ENCODE measurements at regions of chr2 and their contacts with region 1.

Region 1: DNA sequence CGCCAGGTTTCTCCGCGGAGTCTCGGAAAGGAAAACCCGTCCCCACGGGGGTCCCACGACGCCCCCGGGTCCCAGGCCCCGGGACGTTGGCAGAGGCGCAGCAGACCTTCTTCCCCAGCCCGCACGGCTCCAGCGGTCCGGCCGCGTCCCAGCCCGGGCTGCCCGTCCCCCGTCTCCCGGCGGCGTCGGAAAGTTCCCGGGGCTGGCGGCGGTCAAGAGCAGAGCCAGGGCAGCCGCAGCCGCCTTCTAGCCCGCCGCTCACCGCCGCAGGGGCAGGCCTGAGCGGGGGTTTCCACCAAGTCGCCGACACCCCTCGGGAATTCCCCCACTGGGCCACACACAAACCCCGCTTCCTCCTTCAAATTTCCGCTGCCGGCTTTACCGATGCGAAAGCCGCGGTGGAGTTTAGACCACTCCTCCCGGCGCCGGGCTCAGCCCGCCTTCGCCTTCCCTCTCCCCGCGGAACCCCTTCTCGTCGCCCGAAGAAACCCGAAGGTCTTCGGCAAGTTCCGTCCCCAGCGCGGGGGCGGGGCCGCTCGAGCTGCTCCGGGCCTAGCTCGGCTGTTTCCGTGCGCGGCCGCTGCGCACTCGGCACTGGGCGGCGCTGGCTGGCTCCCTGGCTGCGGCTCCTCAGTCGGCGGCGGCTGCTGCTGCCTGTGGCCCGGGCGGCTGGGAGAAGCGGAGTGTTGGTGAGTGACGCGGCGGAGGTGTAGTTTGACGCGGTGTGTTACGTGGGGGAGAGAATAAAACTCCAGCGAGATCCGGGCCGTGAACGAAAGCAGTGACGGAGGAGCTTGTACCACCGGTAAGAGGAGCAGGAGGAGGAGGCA is at the start of gene CREB1:
- DNase-seq: peak; percentile 100
- H3K4me3 Mint-ChIP-seq: peak within 1 kb of the TSS; percentile 92
- H3K27ac Mint-ChIP-seq: peak within 1 kb of the TSS; percentile 99
- H3K4me1 Mint-ChIP-seq: peaks cover 60% of the 10 kb centered on the region
- H3K27me3 Mint-ChIP-seq: no peaks in the 10 kb centered on the region
- total RNA-seq, gene CREB1: 91.3 to 99.1 TPM

Region 2: DNA sequence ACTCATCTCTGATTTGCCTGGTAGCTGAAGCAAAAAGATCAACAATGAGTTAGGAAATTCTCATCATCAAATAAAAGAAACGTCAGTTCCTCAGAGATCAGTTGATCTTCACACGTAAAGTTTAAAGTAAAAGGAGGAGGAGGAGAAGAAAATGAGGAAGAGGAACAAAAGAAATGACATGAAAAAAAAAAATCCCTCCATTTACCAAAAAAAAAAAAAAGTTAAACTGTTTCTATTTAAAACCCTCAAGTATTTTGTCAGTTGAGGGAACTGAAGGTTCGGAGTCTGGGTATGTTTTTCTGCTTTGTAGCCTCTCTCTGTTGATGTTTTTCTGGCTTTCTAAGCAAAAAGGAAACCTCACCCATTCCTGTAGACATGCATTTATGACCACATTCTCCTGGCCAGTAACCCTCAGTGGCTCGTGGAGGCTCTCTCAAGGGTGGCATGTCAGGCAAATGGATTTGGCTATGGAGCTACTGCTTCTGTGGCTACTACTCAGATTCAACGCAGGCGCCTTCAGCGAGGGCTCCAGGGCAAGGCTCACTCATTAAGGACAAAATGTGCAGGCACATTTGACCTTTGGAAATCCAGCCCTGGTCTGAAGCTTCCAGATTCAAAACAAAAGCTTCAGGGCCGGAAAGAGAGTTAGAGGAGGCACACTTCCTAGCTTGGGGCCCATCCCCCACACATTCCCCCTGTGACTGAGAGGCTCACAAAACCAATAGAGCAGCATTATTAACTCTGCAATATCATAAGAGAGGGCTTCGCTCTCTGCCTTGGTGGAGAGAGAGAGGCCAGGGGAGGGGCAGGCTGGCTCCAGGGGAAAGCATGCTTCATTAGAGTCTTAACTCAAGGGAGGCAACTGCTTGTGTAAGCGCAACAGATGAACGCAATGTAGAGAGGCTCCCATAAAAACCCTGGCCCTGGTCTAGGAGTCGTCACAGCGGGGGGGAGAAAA is 386.1 kb before region 1 on chr2:
- CTCF ChIA-PET with region 1: no interaction called
- POLR2A ChIA-PET with region 1: interaction called, 23 read pairs
- DNase-seq: peak; percentile 75
- H3K4me3 Mint-ChIP-seq: peak overlapping the region; percentile 63
- H3K27ac Mint-ChIP-seq: peak overlapping the region; percentile 98
- H3K4me1 Mint-ChIP-seq: peaks cover 64% of the 10 kb centered on the region
- H3K27me3 Mint-ChIP-seq: no peaks in the 10 kb centered on the region

Region 3: GRCh38 chr2:207334624-207335371 is 194.7 kb before region 1 on chr2:
- CTCF ChIA-PET with region 1: no interaction called
- POLR2A ChIA-PET with region 1: interaction called, 29 read pairs
- DNase-seq: peak; percentile 45
- H3K4me3 Mint-ChIP-seq: peak overlapping the region; percentile 68
- H3K27ac Mint-ChIP-seq: peak overlapping the region; percentile 87
- H3K4me1 Mint-ChIP-seq: peaks cover 79% of the 10 kb centered on the region
- H3K27me3 Mint-ChIP-seq: no peaks in the 10 kb centered on the region

Region 4: GRCh38 chr2:207540431-207540830 is 10.9 kb after region 1 on chr2:
- CTCF ChIA-PET with region 1: no interaction called
- POLR2A ChIA-PET with region 1: interaction called, 33 read pairs
- DNase-seq: no peak
- H3K4me3 Mint-ChIP-seq: no peak overlapping the region
- H3K27ac Mint-ChIP-seq: no peak overlapping the region
- H3K4me1 Mint-ChIP-seq: peaks cover 31% of the 10 kb centered on the region
- H3K27me3 Mint-ChIP-seq: no peaks in the 10 kb centered on the region

Region 5: DNA sequence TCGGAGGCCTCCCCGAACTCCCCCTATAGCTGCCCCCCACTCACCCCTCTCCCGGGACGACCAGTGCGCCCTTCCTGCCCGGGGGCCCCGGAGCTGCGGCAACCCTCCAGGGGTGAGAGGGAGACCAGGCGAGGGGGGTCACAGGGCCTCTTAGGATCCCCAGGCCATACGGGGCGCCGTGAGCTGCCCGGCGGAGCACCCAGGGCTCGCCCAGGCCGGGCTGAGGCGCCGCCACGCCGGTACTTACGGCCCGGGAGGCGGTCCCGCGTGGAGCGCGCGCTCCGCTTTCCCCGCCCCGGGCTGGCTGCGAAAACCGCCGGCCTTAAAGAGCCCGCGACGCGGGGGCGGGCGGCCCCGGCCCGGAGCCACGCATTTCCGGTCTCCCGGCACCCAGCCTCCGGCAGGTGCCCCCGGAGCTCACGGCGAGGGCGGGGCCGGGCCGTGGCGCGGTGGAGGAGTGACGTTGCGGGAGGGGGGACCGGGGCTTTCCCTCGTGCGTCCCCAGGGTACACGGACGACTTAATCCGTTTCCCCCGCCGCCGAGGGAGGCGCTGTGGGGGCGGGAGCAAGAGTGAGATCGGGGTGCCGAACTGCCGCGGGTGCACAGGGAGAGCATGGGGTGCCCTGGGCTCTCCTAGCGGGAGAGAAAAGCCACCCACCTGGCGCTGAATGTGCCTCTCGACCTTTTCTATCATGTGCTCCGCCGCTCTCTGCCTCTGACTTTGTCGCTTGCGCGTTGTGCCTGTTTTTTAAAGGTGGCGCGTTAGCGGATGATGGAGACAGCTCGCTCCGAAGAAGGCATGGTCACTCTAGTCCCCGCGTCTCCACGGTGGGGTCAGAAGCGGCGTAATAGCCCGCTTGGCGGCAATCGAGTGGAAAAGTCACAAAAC is 95.7 kb after region 1 on chr2 and contains the start of gene METTL21A:
- CTCF ChIA-PET with region 1: interaction called, 37 read pairs
- POLR2A ChIA-PET with region 1: interaction called, 182 read pairs
- DNase-seq: peak; percentile 94
- H3K4me3 Mint-ChIP-seq: peak within 1 kb of the TSS; percentile 92
- H3K27ac Mint-ChIP-seq: peak within 1 kb of the TSS; percentile 95
- H3K4me1 Mint-ChIP-seq: peaks cover 44% of the 10 kb centered on the region
- H3K27me3 Mint-ChIP-seq: peaks cover 2% of the 10 kb centered on the region
- total RNA-seq, gene METTL21A: 13.6 to 15.7 TPM